K562 (cell line): ENCODE measurements at regions of chr5 and their contacts with region 1.

Region 1: GRCh38 chr5:2017540-2018389 is 135.0 kb upstream of the IRX4 start:
- DNase-seq: peak; percentile 59 to 71 (median 66)
- ATAC-seq: peak; percentile 82
- H3K4me3 ChIP-seq: no peak overlapping the region
- H3K27ac ChIP-seq: no peak overlapping the region
- H3K4me1 ChIP-seq: no peaks in the 10 kb centered on the region
- H3K27me3 ChIP-seq: peaks cover 14 to 52% of the 10 kb centered on the region in 2 experiments; a peak in 4 of 5 replicates
- CTCF ChIP-seq: peak; percentile 67 to 72 (median 71); a peak in 5 of 6 replicates
- EP300 ChIP-seq: no peak
- POLR2A ChIP-seq: no peak
- RAD21 ChIP-seq: peak; percentile 34 to 59; a peak in 3 of 4 replicates

Region 2: DNA sequence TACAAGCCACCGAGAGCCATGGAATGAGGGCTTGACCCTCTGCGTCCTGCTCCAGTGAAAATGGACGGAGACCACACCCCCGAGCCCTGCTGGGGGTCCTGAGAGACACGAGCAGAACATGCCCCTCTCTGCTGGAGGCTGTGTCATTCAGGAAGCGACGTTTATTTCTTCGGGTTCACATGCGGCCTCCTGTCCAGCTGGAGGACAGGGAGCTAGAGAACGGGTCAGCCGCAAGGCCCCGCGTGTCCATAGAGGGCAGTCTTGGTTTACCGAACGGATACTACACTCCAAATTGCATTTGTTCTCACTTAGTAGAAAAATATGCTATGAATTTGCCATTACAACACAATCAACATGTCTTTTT is 254.2 kb before region 1 on chr5:
- CTCF ChIA-PET with region 1: interaction called, 10 read pairs
- POLR2A ChIA-PET with region 1: no interaction called
- in situ Hi-C with region 1: no loop called
- intact Hi-C with region 1: loop called (anchors 2 kb)
- DNase-seq: peak; percentile 51 to 78 (median 63)
- ATAC-seq: peak; percentile 95
- H3K4me3 ChIP-seq: no peak overlapping the region
- H3K27ac ChIP-seq: no peak overlapping the region
- H3K4me1 ChIP-seq: peaks cover 0 to 9% of the 10 kb centered on the region in 2 experiments; a peak in 1 of 5 replicates
- H3K27me3 ChIP-seq: peaks cover 69 to 84% of the 10 kb centered on the region in 2 experiments
- CTCF ChIP-seq: peak; percentile 83 to 88 (median 87)
- EP300 ChIP-seq: no peak
- POLR2A ChIP-seq: no peak
- RAD21 ChIP-seq: peak; percentile 59 to 82

Region 3: GRCh38 chr5:2038321-2039179 is 20.8 kb after region 1 on chr5:
- CTCF ChIA-PET with region 1: no interaction called
- POLR2A ChIA-PET with region 1: no interaction called
- in situ Hi-C with region 1: no loop called
- intact Hi-C with region 1: no loop called
- DNase-seq: peak; percentile 79 to 97 (median 94)
- ATAC-seq: peak; percentile 100
- H3K4me3 ChIP-seq: peak overlapping the region; percentile 44
- H3K27ac ChIP-seq: no peak overlapping the region
- H3K4me1 ChIP-seq: peaks cover 0 to 5% of the 10 kb centered on the region in 2 experiments; a peak in 2 of 5 replicates
- H3K27me3 ChIP-seq: peaks cover 25 to 41% of the 10 kb centered on the region in 2 experiments; a peak in 4 of 5 replicates
- CTCF ChIP-seq: peak; percentile 78 to 94 (median 83)
- EP300 ChIP-seq: no peak
- POLR2A ChIP-seq: no peak
- RAD21 ChIP-seq: peak; percentile 56 to 75